Adrenal gland (tissue), 19 donors: ENCODE measurements at regions of chr19 and their contacts with region 1.

Region 1: DNA sequence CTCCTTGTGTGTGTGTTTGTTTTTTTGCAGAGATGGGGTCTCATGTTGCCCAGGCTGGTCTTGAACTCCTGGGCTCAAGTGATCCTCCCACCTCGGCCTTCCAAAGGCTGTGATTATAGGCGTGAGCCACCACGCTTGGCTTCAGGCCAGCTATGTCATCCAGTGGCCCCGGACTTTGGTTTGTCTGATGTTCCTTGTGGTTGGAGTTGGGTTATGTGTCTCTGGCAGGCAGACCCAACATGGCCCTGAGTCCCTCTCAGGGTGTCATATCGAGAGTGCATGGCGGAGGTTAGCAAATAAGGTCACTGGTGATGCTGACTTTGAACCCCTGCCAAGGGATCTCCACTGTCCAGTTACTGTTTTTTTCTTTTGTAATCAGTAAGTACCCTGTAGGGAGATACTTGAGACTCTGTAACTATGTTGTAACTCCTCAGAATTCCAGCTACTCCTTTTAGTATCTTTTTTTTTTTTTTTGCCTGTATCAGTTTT is 37.3 kb downstream of the SMARCA4 start:
- DNase-seq: peak; percentile 49 to 93 (median 88)
- H3K4me3 ChIP-seq: no peak overlapping the region
- H3K27ac ChIP-seq: peak overlapping the region in 2 of 5 donors; percentile 54 to 57
- H3K4me1 ChIP-seq: peaks cover 0 to 7% of the 10 kb centered on the region in 2 donors
- H3K27me3 ChIP-seq: no peaks in the 10 kb centered on the region
- CTCF ChIP-seq: no peak
- POLR2A ChIP-seq: no peak

Region 2: DNA sequence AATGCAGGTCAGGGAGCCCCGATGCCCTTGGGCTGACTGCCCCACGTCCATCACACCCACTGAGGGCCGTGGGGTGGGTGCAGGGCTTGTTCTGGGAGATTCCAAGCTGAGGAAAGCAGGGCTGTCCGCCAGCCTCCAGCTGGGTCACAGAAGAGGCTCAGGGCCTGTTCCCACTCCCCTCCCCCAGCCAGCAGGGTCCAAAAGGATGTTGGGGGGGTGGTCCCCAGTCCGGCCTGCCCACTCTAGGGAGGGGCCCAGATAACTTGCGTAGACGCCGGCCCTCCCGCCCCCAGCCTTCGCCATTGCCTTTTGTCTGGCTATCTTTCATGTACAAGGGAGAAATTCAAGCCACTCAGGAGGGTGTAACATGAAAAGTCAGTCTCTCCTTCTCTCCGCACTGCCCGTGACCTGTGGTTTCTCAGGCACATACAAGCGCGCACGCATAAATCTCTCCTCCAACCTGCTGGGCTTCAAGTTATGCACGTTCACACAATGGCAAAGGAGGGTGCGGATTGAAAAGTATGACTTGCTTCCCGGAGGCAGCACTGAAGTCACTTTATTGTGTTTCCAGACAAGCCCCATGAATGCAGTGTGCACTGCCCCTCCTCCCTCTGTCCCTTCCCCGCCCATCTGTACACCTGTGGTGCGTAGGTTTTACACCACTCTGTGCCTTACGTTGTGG is 106.5 kb before region 1 on chr19:
- intact Hi-C with region 1: loop called in 1 of 2 experiments (anchors 5 kb)
- DNase-seq: no peak
- H3K4me3 ChIP-seq: no peak overlapping the region
- H3K27ac ChIP-seq: peak overlapping the region in 1 of 5 donors; percentile 10
- H3K4me1 ChIP-seq: peaks cover 8 to 9% of the 10 kb centered on the region in 2 donors
- H3K27me3 ChIP-seq: no peaks in the 10 kb centered on the region
- CTCF ChIP-seq: no peak
- POLR2A ChIP-seq: no peak